ENCODE measurements at regions of chr4 and their contacts with region 1.

Region 1: DNA sequence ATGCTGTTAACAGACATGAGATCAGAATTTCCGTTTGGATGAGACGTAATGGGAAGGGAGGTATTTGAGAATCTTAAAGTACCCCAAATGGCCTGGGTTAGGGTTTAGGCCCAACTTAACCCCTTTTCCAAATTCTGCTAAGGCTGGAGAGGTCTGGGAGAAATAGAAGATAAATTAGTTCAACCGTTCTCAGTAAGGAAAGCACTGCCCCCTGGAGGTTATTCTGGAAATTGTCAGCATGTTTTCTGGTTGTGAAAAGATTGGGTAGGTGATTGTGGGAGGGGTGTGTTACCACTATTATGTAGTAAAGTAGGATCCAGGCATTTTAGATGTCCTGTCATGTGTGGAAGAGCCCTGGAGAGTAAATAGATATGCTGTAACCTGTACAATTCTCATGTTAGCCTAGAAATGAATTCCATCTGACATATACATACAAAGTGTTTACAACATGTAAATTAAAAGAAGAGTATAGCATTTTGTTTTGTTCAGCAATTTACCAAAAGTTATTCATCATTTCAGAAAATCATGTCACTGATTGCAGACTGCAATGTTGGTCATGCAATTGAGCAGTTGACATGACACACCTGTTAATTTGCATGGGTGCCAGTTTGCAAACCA is 26.8 kb upstream of the GRXCR1 start:
- DNase-seq: no peak
- H3K4me3 ChIP-seq: no peak overlapping the region
- H3K27ac ChIP-seq: no peak overlapping the region
- H3K4me1 ChIP-seq: no peaks in the 10 kb centered on the region
- H3K27me3 ChIP-seq: no peaks in the 10 kb centered on the region
- CTCF ChIP-seq: peak in 2 of 3 experiments; percentile 34 to 48
- POLR2A ChIP-seq: no peak

Region 2: DNA sequence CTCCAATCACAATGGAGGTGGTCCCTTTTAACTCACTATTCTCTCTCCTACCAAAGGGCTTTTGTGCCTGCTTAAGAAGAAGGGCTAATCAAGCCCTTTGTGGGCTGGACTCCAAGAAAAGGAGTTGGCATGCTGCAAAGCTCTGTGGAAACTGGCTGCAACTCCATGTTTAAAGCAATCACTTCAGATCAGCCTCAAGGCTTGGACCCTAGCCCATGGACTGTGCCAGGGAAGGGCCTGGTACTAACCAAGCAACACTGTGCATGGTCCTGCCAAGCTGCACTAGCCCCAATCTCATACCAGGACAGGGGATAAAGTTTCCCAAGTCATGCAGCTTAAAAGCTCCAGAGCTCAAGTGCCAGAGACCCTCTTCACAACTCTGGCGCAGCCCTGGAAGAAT is 295.5 kb before region 1 on chr4:
- intact Hi-C with region 1: loop called (anchors 5 kb)
- DNase-seq: no peak
- H3K4me3 ChIP-seq: no peak overlapping the region
- H3K27ac ChIP-seq: no peak overlapping the region
- H3K4me1 ChIP-seq: no peaks in the 10 kb centered on the region
- H3K27me3 ChIP-seq: no peaks in the 10 kb centered on the region
- CTCF ChIP-seq: no peak
- POLR2A ChIP-seq: no peak

Region 3: DNA sequence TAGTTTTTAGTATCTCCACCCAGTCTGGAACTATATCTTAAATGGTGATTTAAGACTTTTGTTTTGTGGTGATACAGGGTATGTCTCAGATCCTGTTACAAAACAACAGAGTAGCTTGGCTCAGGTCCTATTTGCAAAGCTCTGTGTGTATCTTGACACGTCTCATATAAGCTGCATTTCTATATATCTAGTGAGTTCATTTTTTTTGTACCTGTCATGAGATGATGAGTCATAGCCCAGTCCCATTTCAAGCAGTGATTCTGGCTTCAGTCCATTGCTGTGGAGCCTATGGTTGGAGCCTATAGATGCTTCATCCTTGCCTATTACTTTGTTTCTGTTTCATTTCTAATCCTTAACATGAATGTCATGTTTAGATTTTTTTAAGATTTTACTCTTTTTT is 49.8 kb after region 1 on chr4:
- intact Hi-C with region 1: no loop called
- DNase-seq: no peak
- H3K4me3 ChIP-seq: no peak overlapping the region
- H3K27ac ChIP-seq: no peak overlapping the region
- H3K4me1 ChIP-seq: no peaks in the 10 kb centered on the region
- H3K27me3 ChIP-seq: no peaks in the 10 kb centered on the region
- CTCF ChIP-seq: no peak
- POLR2A ChIP-seq: no peak

Region 4: GRCh38 chr4:44522761-44523445 is 1657.2 kb after region 1 on chr4:
- intact Hi-C with region 1: no loop called
- DNase-seq: no peak
- H3K4me3 ChIP-seq: no peak overlapping the region
- H3K27ac ChIP-seq: no peak overlapping the region
- H3K4me1 ChIP-seq: no peaks in the 10 kb centered on the region
- H3K27me3 ChIP-seq: no peaks in the 10 kb centered on the region
- CTCF ChIP-seq: no peak
- POLR2A ChIP-seq: no peak